Psoas muscle (tissue), 8 donors: ENCODE measurements at regions of chr15 and their contacts with region 1.

Region 1: GRCh38 chr15:93012786-93013185 is 76.2 kb downstream of the RGMA start:
- DNase-seq: no peak
- ATAC-seq: peak in 2 of 4 donors; percentile 25 to 35
- H3K4me3 ChIP-seq: no peak overlapping the region
- H3K27ac ChIP-seq: no peak overlapping the region
- H3K4me1 ChIP-seq: no peaks in the 10 kb centered on the region
- H3K27me3 ChIP-seq: no peaks in the 10 kb centered on the region
- CTCF ChIP-seq: no peak

Region 2: GRCh38 chr15:92938387-92938786 is 74.4 kb before region 1 on chr15:
- intact Hi-C with region 1: loop called in 1 of 2 experiments (anchors 5 kb)
- DNase-seq: no peak
- ATAC-seq: no peak
- H3K4me3 ChIP-seq: no peak overlapping the region
- H3K27ac ChIP-seq: no peak overlapping the region
- H3K4me1 ChIP-seq: peaks cover 15% of the 10 kb centered on the region
- H3K27me3 ChIP-seq: no peaks in the 10 kb centered on the region
- CTCF ChIP-seq: peak; percentile 21

Region 3: DNA sequence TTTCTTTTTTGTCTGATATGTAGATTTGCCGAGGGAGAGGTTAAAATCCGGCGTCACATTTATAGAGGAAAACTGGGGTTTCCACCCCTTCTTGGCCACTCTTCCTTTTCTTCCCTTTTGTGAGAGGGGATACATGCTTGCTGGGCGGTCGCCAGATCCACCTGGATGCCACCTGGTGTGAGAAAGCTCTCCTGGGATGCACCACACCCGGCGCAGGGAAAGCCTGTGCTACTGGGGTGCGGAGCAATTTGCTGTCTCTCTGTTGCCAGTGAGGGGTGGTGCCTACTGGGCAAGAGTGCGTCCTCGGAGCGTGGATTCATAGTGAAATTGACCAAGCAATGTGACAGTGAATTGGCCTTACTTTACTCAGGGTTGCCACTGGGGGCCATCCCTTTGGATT is 78.7 kb after region 1 on chr15:
- intact Hi-C with region 1: no loop called
- DNase-seq: no peak
- ATAC-seq: no peak
- H3K4me3 ChIP-seq: no peak overlapping the region
- H3K27ac ChIP-seq: peak overlapping the region; percentile 90
- H3K4me1 ChIP-seq: peaks cover 6% of the 10 kb centered on the region
- H3K27me3 ChIP-seq: peaks cover 0 to 3% (median 0%) of the 10 kb centered on the region in 3 donors
- CTCF ChIP-seq: no peak